ENCODE measurements at regions of chr11 and their contacts with region 1.

Region 1: DNA sequence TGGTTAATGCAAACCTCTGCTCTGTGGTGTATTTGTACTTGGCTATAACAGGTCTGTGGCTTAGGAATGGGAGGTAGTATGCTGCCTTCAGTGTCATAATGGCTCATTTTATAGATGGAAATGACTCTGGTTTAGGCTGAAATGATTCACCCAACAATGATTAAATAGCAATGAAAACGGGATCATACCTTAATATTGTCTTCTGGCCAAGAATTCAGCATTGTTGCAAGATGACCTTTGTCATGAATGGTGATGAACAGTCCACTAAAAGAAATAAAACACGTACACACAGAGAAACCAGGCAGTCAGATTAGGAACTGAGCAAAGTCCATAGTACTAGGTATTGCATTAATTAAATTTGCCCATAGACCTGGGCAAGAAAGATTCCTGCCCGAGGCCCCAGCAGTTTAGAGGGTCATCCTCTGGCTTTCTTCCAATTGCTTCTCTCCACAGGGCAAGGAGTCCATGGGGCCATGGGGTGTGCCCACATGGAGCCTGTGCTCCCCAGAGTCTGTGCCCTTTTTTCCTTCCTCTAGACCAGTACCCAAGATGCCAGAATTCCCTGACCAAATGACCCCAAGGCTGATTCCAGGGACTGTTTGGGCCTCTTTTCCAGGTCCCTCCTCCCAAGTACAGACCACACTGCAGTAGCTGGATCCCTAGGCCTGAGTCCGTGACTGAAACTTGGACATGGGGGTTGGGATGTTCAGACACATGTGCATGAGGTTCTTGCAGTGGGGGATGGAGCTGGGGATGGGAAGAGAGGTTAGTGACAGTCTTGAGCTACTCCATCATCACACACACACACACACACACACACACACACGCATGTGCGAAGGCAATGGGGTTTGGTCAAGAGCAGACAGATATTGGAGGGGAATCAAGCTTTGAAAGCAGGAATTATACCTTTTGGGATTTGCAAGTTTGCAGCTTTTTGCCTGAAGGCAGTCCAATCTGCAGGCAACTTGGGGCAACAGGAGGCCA is 134.2 kb downstream of the CCDC81 start:
- DNase-seq: peak; percentile 92
- ATAC-seq: peak; percentile 88
- H3K4me3 ChIP-seq: peak overlapping the region; percentile 32
- H3K27ac ChIP-seq: peak overlapping the region; percentile 99
- H3K4me1 ChIP-seq: peaks cover 43% of the 10 kb centered on the region
- H3K27me3 ChIP-seq: no peaks in the 10 kb centered on the region
- CTCF ChIP-seq: no peak

Region 2: GRCh38 chr11:86464509-86465221 is 44.2 kb before region 1 on chr11:
- CTCF ChIA-PET with region 1: no interaction called
- POLR2A ChIA-PET with region 1: no interaction called
- intact Hi-C with region 1: loop called (anchors 1 kb)
- DNase-seq: peak; percentile 60
- ATAC-seq: peak; percentile 67
- H3K4me3 ChIP-seq: no peak overlapping the region
- H3K27ac ChIP-seq: peak overlapping the region; percentile 91
- H3K4me1 ChIP-seq: peaks cover 26% of the 10 kb centered on the region
- H3K27me3 ChIP-seq: no peaks in the 10 kb centered on the region
- CTCF ChIP-seq: no peak

Region 3: GRCh38 chr11:86676548-86677154 is 167.8 kb after region 1 on chr11:
- CTCF ChIA-PET with region 1: no interaction called
- POLR2A ChIA-PET with region 1: no interaction called
- intact Hi-C with region 1: no loop called
- DNase-seq: peak; percentile 18
- ATAC-seq: no peak
- H3K4me3 ChIP-seq: no peak overlapping the region
- H3K27ac ChIP-seq: no peak overlapping the region
- H3K4me1 ChIP-seq: peaks cover 29% of the 10 kb centered on the region
- H3K27me3 ChIP-seq: no peaks in the 10 kb centered on the region
- CTCF ChIP-seq: peak; percentile 49

Region 4: DNA sequence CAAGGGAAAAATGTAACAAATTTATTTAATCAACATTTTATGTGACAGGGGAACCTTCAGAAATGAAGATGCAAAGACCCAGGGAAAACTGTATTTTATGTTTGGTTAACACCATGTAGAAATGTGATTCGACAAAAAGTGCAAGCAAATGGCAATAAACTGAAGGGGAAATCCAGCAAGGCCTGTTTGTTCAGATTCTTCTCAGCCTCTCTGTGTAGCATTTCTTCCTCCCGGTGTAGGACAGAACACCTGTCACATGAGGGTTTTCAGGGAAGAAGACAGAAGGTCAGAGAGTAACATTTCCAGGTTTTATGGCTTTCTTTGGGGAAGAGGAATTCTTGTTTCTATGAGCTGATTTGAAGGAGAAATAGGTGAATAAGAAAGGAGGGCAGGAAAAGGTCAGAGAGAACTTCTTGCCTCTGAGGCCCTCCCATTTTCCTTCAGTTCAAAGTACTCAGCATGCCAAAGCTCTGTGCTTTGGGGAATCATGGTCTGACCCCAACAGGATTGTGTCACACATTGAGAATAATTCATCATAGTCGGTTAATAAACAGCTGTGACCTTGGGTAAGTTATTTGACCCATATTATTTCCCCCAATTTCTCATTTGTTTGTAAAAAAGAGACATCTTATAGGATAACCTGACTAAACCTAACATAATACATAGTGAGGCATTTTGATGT is 209.1 kb after region 1 on chr11:
- CTCF ChIA-PET with region 1: no interaction called
- POLR2A ChIA-PET with region 1: no interaction called
- intact Hi-C with region 1: no loop called
- DNase-seq: peak; percentile 47
- ATAC-seq: no peak
- H3K4me3 ChIP-seq: no peak overlapping the region
- H3K27ac ChIP-seq: no peak overlapping the region
- H3K4me1 ChIP-seq: peaks cover 36% of the 10 kb centered on the region
- H3K27me3 ChIP-seq: no peaks in the 10 kb centered on the region
- CTCF ChIP-seq: no peak

Measured in PC-3 (cell line).